HepG2 (cell line): ENCODE measurements at regions of chr19 and their contacts with region 1.

Region 1: DNA sequence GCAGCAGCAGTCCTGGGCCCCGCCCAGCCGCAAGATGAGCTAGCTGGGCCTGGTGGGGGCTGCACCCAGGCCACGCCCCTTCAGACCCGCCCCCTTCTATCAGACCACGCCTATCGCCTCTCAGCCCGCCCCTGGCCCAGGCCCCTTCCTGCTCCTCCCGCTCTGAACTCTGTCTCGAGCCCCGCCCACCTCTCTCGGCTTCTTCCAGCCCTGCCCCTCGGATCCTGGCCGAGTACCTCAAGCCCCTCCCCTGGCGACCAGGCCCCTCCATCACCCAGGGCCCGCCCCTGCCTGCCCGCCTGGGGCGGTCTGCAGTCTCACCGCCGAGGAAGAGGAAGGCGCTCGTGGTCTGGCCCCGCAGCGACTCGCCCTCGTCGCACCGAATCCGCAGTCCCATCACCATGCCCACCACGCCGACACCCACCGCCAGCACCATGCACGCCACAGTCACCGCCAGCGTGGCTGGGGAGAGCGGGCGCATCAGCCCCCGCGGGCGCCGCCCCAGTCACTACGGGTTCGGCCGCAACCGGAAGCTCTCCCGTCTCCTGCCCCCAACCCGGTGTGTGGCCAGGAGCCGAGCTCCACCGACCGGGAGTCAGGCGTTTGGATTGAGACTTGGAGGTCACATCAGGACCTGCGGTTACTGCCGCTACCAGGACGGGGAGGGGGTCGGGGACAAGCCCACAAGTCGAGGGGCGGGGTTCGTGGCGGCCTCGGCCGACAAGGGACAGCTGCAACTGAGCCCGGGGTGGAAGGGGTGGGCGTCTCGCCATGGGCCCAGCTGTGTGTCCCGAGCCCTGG is 1.0 kb downstream of the CLDND2 start:
- DNase-seq: peak; percentile 96
- ATAC-seq: peak; percentile 64
- H3K4me3 ChIP-seq: peak overlapping the region; percentile 80 to 94 (median 94)
- H3K27ac ChIP-seq: peak overlapping the region; percentile 100
- H3K4me1 ChIP-seq: peaks cover 52% of the 10 kb centered on the region
- H3K27me3 ChIP-seq: peaks cover 0 to 12% of the 10 kb centered on the region in 2 experiments; a peak in 2 of 5 replicates
- CTCF ChIP-seq: no peak; the same call in 1 of the 2 replicates
- EP300 ChIP-seq: no peak
- POLR2A ChIP-seq: peak in 1 of 2 experiments; percentile 82
- RAD21 ChIP-seq: peak; percentile 70

Region 2: GRCh38 chr19:51338563-51339312 is 29.0 kb before region 1 on chr19:
- CTCF ChIA-PET with region 1: interaction called, 3 read pairs
- POLR2A ChIA-PET with region 1: interaction called, 211 read pairs
- in situ Hi-C with region 1: no loop called
- intact Hi-C with region 1: loop called (anchors 2 kb)
- DNase-seq: peak; percentile 68
- ATAC-seq: peak; percentile 74
- H3K4me3 ChIP-seq: peak overlapping the region; percentile 67 to 80 (median 80)
- H3K27ac ChIP-seq: peak overlapping the region; percentile 40
- H3K4me1 ChIP-seq: peaks cover 43% of the 10 kb centered on the region
- H3K27me3 ChIP-seq: no peaks in the 10 kb centered on the region
- CTCF ChIP-seq: peak; percentile 96
- EP300 ChIP-seq: no peak
- POLR2A ChIP-seq: no peak
- RAD21 ChIP-seq: peak; percentile 84

Region 3: DNA sequence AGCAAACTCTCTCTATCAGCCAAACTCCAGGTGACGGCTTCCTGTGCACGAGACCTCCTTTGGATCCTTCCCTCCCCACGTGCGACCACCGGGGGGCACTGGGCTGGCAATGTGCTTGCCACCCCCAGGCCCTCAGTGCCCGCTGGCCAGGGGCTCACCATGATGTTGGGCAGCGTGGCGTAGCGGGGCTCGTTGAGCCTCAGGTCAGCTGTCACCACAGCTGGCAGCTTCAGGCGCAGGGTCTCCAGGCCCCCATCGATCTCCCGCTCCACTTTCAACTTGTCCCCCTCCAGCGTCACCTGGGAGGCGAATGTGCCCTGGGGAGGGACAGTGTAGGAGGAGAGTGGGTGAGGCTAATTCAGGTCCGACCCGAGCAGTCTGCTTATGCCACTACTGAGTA is 21.0 kb before region 1 on chr19:
- CTCF ChIA-PET with region 1: no interaction called
- POLR2A ChIA-PET with region 1: interaction called, 259 read pairs
- in situ Hi-C with region 1: no loop called
- intact Hi-C with region 1: no loop called
- DNase-seq: no peak
- ATAC-seq: no peak
- H3K4me3 ChIP-seq: no peak overlapping the region
- H3K27ac ChIP-seq: peak overlapping the region; percentile 79
- H3K4me1 ChIP-seq: peaks cover 100% of the 10 kb centered on the region
- H3K27me3 ChIP-seq: no peaks in the 10 kb centered on the region; a peak in 1 of 5 replicates
- CTCF ChIP-seq: peak; percentile 52
- EP300 ChIP-seq: no peak
- POLR2A ChIP-seq: no peak; a peak in 1 of 4 replicates
- RAD21 ChIP-seq: peak; percentile 31; the same call in 1 of the 2 replicates

Region 4: GRCh38 chr19:51354742-51355148 is 13.0 kb before region 1 on chr19:
- CTCF ChIA-PET with region 1: no interaction called
- POLR2A ChIA-PET with region 1: interaction called, 309 read pairs
- in situ Hi-C with region 1: no loop called
- intact Hi-C with region 1: loop called (anchors 1 kb)
- DNase-seq: peak; percentile 99
- ATAC-seq: peak; percentile 76
- H3K4me3 ChIP-seq: peak overlapping the region; percentile 62 to 82 (median 72)
- H3K27ac ChIP-seq: peak overlapping the region; percentile 100
- H3K4me1 ChIP-seq: peaks cover 86% of the 10 kb centered on the region
- H3K27me3 ChIP-seq: no peaks in the 10 kb centered on the region; a peak in 1 of 5 replicates
- CTCF ChIP-seq: no peak
- EP300 ChIP-seq: peak; percentile 42 to 94; a peak in 3 of 4 replicates
- POLR2A ChIP-seq: no peak; a peak in 2 of 4 replicates
- RAD21 ChIP-seq: no peak

Region 5: GRCh38 chr19:51386882-51387520 is 19.2 kb after region 1 on chr19:
- CTCF ChIA-PET with region 1: no interaction called
- POLR2A ChIA-PET with region 1: interaction called, 30 read pairs
- in situ Hi-C with region 1: no loop called
- intact Hi-C with region 1: no loop called
- DNase-seq: no peak
- ATAC-seq: peak; percentile 38
- H3K4me3 ChIP-seq: peak overlapping the region in 1 of 3 experiments; percentile 62; a peak in 2 of 6 replicates
- H3K27ac ChIP-seq: no peak overlapping the region
- H3K4me1 ChIP-seq: peaks cover 46% of the 10 kb centered on the region
- H3K27me3 ChIP-seq: peaks cover 0 to 2% of the 10 kb centered on the region in 2 experiments; a peak in 1 of 5 replicates
- CTCF ChIP-seq: no peak
- EP300 ChIP-seq: no peak
- POLR2A ChIP-seq: no peak
- RAD21 ChIP-seq: no peak

Region 6: DNA sequence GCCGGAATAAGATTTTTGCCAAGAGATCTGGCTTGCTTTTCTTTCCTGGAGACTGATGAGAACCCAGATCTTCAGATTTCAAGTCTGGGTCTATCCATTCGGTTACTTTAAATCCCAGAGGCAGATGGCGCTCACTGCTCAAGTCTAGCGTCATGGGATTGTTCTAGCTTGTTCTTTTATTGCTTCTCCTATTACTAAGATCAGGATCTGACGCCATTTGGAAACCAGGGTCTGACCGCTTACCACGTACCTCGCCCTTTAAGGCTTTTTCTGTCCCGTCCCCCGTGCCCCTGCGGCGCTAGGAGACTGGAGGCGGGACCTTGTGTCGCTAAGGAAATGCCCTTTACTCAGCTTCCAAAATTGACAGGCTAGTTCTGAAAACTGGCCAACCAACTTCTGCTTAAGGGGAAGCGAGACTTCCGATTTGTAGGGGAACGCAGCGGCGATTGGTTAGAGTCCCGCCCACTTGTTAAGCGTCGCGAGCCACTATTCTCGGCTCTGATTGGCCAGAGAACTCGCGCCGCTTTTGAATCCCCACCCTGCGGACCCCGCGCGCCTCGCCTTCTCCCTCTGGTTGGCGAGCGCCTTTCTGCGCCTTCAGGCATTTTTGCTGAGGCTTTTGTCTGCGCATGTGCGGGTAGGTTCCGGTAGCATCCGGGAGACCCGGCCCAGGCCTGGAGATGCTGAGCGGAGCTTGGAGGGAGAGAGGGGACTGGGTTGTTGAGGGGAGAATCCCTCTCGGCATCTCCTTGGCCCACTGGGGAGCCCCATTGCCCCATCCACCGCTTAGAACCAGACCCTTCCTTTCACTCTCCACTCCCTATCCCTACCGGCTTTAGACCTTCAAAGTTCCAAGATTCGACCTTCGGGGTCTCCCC is 26.4 kb after region 1 on chr19:
- CTCF ChIA-PET with region 1: no interaction called
- POLR2A ChIA-PET with region 1: interaction called, 30 read pairs
- in situ Hi-C with region 1: no loop called
- intact Hi-C with region 1: no loop called
- DNase-seq: peak; percentile 99
- ATAC-seq: peak; percentile 98
- H3K4me3 ChIP-seq: peak overlapping the region; percentile 60 to 76 (median 66)
- H3K27ac ChIP-seq: peak overlapping the region; percentile 85
- H3K4me1 ChIP-seq: peaks cover 48% of the 10 kb centered on the region
- H3K27me3 ChIP-seq: no peaks in the 10 kb centered on the region
- CTCF ChIP-seq: no peak; the same call in 1 of the 2 replicates
- EP300 ChIP-seq: no peak
- POLR2A ChIP-seq: peak in 1 of 2 experiments; percentile 60; a peak in 2 of 4 replicates
- RAD21 ChIP-seq: no peak

Region 7: DNA sequence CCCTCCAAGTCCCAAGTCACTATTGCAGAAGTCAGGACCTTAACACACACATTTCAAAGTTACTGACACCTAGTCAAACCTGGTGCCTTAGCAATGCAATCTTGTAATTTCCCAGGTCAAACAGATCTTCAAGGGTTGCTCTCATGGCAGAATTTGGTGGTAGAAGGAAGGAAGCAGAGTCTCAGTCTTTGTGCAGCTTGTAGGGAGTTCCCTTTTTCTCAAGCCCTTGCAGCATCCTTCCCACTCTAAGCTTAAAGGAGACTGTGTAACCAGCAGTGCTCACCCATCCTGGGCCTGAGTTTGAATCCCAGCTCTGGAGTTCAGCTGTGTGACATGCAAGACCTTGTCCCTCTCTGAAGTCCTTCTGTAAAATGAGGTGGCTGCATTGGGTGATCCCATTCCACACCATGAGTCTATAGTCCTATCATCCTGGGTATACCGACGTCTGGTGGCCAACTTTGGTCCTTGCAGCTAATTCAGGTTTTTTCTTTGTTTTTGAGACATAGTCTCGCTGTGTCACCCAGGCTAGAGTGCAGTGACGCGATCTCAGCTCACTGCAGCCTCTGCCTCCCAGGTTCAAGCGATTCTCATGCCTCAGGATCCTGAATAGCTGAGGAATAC is 39.9 kb after region 1 on chr19:
- CTCF ChIA-PET with region 1: no interaction called
- POLR2A ChIA-PET with region 1: interaction called, 8 read pairs
- in situ Hi-C with region 1: no loop called
- intact Hi-C with region 1: loop called (anchors 1 kb)
- DNase-seq: peak; percentile 74
- ATAC-seq: peak; percentile 92
- H3K4me3 ChIP-seq: no peak overlapping the region
- H3K27ac ChIP-seq: no peak overlapping the region
- H3K4me1 ChIP-seq: peaks cover 19% of the 10 kb centered on the region
- H3K27me3 ChIP-seq: no peaks in the 10 kb centered on the region
- CTCF ChIP-seq: peak; percentile 85
- EP300 ChIP-seq: no peak
- POLR2A ChIP-seq: no peak
- RAD21 ChIP-seq: peak; percentile 80